ENCODE measurements at regions of chr6 and their contacts with region 1.

Region 1: DNA sequence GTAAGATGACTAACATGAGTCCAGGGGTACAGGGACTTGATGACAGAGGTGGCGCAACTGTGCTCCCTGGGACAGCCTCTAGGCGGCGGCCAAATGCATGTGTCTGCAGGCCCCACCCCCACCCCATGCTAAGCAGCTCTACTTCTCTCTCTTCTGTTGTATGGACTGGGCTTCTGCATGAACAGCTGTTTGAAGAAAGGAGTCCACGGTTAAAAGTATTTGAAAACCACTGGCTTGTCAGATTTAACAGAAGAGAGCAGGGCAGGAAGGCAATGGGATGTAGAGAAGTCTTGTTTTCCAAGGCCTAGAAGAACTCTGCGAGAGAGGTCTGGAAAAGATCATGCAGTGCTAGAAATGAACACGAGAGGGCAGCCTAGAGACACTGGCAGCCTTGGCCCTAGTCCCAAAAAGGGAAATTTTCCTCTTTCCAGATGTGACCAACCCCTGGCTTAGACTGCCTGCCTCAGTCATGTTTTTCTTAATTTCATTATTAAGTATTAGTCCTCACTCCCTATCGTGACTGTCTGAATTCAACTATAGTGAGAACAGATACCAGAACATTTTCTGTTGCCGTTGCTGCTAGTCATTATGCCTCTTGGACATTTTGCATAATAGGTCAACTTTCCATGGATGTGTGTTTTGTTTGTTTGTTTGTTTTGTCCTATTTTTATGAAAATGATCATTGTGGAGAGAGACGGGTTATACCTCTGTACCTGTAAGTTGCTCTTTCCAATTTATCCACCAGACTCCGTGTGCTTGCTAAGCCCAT is 265.0 kb downstream of the ADGRG6 start:
- DNase-seq: peak; percentile 63
- H3K4me3 Mint-ChIP-seq: no peak overlapping the region
- H3K27ac Mint-ChIP-seq: no peak overlapping the region
- H3K4me1 Mint-ChIP-seq: peaks cover 49% of the 10 kb centered on the region
- H3K27me3 Mint-ChIP-seq: no peaks in the 10 kb centered on the region

Region 2: DNA sequence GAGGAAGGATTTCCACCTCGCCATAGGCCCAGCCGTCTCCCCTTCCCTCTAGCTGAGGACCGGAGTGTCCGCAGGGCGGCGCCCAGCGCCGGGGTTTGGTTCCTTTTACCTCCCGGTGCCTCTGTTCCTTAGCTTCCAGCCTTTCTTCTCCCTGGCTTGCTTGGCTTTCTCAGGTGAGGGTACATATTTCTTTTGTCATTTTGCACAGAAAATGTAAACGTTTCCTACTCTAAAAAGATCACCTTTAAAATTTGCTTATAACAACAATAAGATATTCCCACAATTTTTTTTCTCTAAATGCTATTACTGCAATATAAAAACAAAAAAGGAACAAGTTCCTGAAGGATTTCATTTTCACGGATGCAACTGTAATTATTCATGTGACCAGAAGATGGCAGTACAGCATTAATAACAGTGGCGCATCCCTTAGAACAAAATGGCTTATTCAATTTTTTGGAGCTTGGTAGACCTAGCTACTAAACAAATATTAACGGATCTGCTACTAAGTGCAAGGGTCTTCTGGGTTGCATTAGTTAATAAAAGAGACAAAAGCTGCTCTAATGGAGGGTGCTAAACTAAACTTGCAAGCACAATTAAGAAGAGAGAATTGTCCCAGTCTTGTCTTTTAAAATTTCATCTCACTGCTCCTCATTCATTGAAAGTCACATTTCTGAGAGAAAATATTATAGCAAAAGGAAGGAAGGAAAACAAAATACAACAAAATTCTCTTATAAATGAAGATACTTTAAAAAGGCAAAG is 92.1 kb before region 1 on chr6:
- CTCF ChIA-PET with region 1: interaction called, 10 read pairs
- POLR2A ChIA-PET with region 1: no interaction called
- intact Hi-C with region 1: no loop called
- DNase-seq: no peak
- H3K4me3 Mint-ChIP-seq: no peak overlapping the region
- H3K27ac Mint-ChIP-seq: no peak overlapping the region
- H3K4me1 Mint-ChIP-seq: no peaks in the 10 kb centered on the region
- H3K27me3 Mint-ChIP-seq: peaks cover 2% of the 10 kb centered on the region

Region 3: GRCh38 chr6:142551274-142551811 is 15.5 kb before region 1 on chr6:
- CTCF ChIA-PET with region 1: interaction called, 16 read pairs
- POLR2A ChIA-PET with region 1: no interaction called
- intact Hi-C with region 1: no loop called
- DNase-seq: peak; percentile 55
- H3K4me3 Mint-ChIP-seq: no peak overlapping the region
- H3K27ac Mint-ChIP-seq: no peak overlapping the region
- H3K4me1 Mint-ChIP-seq: peaks cover 9% of the 10 kb centered on the region
- H3K27me3 Mint-ChIP-seq: peaks cover 3% of the 10 kb centered on the region

Region 4: GRCh38 chr6:142705054-142705453 is 138.2 kb after region 1 on chr6:
- CTCF ChIA-PET with region 1: no interaction called
- POLR2A ChIA-PET with region 1: no interaction called
- intact Hi-C with region 1: no loop called
- DNase-seq: no peak
- H3K4me3 Mint-ChIP-seq: no peak overlapping the region
- H3K27ac Mint-ChIP-seq: no peak overlapping the region
- H3K4me1 Mint-ChIP-seq: peaks cover 9% of the 10 kb centered on the region
- H3K27me3 Mint-ChIP-seq: no peaks in the 10 kb centered on the region

Region 5: GRCh38 chr6:142850679-142851423 is 284.0 kb after region 1 on chr6:
- CTCF ChIA-PET with region 1: no interaction called
- POLR2A ChIA-PET with region 1: no interaction called
- intact Hi-C with region 1: loop called (anchors 10 kb)
- DNase-seq: peak; percentile 71
- H3K4me3 Mint-ChIP-seq: peak overlapping the region; percentile 58
- H3K27ac Mint-ChIP-seq: peak overlapping the region; percentile 94
- H3K4me1 Mint-ChIP-seq: peaks cover 97% of the 10 kb centered on the region
- H3K27me3 Mint-ChIP-seq: no peaks in the 10 kb centered on the region

Region 6: GRCh38 chr6:143427109-143427817 is 860.5 kb after region 1 on chr6:
- CTCF ChIA-PET with region 1: interaction called, 4 read pairs
- POLR2A ChIA-PET with region 1: no interaction called
- intact Hi-C with region 1: loop called (anchors 2 kb)
- DNase-seq: peak; percentile 78
- H3K4me3 Mint-ChIP-seq: no peak overlapping the region
- H3K27ac Mint-ChIP-seq: no peak overlapping the region
- H3K4me1 Mint-ChIP-seq: peaks cover 6% of the 10 kb centered on the region
- H3K27me3 Mint-ChIP-seq: no peaks in the 10 kb centered on the region